Activated CD4-positive, alpha-beta T cell treated with anti-CD3 and anti-CD28 coated beads for 36 hours (primary cell): ENCODE measurements at regions of chr11 and their contacts with region 1.

Region 1: DNA sequence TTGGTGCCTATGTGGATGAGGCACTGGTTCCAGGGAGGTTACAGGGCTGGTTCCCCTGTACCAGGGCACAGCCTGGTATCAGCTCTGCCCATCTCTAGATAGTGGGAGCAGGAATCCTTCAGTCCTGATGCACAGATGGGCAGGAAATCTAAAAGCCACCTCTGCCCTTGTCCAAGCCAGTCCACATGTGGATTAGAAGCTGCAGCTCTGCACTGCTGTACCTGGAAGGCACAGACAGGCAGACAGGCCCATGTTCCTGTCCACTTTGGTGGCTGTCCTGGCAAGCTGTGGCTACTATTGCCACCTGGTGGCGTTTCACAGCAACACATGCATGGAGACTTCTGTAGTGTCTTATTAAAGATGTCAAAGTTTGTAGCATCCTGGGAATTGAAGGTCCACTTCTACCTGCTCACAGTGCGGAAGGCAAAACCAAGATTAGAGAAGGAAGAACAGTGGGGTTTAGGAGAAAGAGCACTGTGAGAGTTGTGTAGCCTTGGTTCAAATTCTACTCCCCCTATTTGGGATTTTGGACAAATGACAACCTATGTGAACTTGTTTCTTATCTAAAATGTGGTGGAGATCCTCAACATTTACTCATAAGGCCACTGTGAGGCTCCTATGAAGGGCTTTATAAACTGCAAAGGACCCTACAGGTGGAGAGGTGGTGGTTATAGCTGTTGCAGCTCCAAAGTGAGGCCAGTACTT is 30.1 kb downstream of the NAV2 start:
- DNase-seq: peak; percentile 82
- ATAC-seq: peak; percentile 78
- H3K4me3 Mint-ChIP-seq: no peak overlapping the region
- H3K27ac Mint-ChIP-seq: no peak overlapping the region
- H3K4me1 Mint-ChIP-seq: no peaks in the 10 kb centered on the region
- H3K27me3 Mint-ChIP-seq: peaks cover 2% of the 10 kb centered on the region

Region 2: DNA sequence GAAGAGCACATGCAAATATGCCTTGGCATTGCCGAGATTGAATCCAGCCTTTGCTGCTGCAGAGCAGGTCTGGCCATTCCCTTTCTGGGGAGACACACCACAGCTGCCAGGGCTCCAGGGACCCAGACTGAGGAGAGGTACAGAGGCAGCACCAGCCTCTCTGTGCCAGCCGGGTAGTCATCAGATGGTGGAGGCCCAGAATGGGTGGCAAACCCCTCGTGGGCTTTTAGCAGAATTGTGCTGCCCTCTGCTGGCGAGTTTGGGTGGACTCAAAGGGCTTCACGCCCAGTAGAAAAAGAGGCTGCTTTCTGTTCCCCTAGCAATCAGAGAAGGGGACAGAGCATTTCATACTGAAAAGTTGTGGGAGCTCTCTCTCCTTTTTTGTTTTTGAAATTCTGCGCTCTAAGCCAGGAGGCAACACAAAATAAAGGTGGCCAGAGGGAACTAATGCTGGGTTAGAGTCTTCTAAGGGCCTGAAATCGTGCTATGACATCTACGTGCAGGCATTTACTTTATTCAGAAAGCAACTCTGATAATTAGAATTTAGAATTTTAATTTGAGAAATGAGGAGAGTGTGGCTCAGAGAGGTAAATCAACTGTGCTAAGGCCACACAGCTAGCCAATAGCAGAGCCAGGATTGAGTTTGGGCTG is 188.9 kb before region 1 on chr11:
- CTCF ChIA-PET with region 1: interaction called, 48 read pairs
- POLR2A ChIA-PET with region 1: no interaction called
- intact Hi-C with region 1: loop called in 1 of 2 experiments (anchors 1 kb)
- DNase-seq: peak; percentile 90
- ATAC-seq: peak; percentile 86
- H3K4me3 Mint-ChIP-seq: no peak overlapping the region
- H3K27ac Mint-ChIP-seq: no peak overlapping the region
- H3K4me1 Mint-ChIP-seq: peaks cover 2% of the 10 kb centered on the region
- H3K27me3 Mint-ChIP-seq: peaks cover 10% of the 10 kb centered on the region

Region 3: GRCh38 chr11:19561011-19561410 is 181.7 kb before region 1 on chr11:
- CTCF ChIA-PET with region 1: interaction called, 48 read pairs
- POLR2A ChIA-PET with region 1: no interaction called
- intact Hi-C with region 1: loop called (anchors 1 kb)
- DNase-seq: no peak
- ATAC-seq: no peak
- H3K4me3 Mint-ChIP-seq: no peak overlapping the region
- H3K27ac Mint-ChIP-seq: no peak overlapping the region
- H3K4me1 Mint-ChIP-seq: peaks cover 2% of the 10 kb centered on the region
- H3K27me3 Mint-ChIP-seq: peaks cover 10% of the 10 kb centered on the region

Region 4: DNA sequence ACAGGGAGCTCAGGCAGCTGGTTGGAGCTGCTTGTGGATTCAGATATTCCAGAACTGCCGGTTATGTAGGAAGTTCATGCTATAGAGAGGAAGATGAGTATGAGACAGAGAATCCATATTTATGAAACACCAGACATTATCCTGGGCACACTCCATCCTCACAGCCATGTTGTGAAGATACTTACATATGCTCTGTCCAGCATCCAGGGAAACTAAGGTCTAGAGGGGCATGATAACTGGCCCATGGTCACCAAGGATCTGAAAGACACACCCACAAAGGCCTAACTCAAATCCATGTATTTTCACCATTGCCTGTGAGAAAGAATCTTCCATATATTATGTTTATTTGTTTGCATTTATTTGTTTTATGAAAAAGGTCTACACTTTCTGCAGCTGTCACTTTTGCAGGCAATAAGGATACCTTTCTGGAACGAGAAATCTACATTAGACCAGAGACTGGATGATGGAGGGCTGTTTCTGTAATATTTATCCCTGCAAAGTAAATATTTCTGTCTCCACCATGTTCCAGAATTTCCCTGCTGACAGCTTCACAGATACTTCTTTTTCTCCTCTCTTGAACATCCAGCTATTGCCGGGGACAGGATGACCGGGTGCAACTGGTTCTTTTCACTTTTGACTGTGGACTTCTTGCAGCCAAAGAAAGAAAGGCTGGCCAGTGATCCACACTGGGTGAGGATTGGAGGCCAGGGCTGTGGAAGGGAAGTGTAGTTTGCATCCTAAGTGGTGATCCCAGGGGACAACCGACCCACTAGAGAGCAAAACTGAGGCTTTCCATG is 176.0 kb before region 1 on chr11:
- CTCF ChIA-PET with region 1: interaction called, 46 read pairs
- POLR2A ChIA-PET with region 1: no interaction called
- intact Hi-C with region 1: loop called (anchors 1 kb)
- DNase-seq: no peak
- ATAC-seq: no peak
- H3K4me3 Mint-ChIP-seq: no peak overlapping the region
- H3K27ac Mint-ChIP-seq: no peak overlapping the region
- H3K4me1 Mint-ChIP-seq: no peaks in the 10 kb centered on the region
- H3K27me3 Mint-ChIP-seq: peaks cover 12% of the 10 kb centered on the region

Region 5: GRCh38 chr11:19903620-19904069 is 160.9 kb after region 1 on chr11:
- CTCF ChIA-PET with region 1: interaction called, 6 read pairs
- POLR2A ChIA-PET with region 1: no interaction called
- intact Hi-C with region 1: loop called (anchors 5 to 10 kb)
- DNase-seq: peak; percentile 77
- ATAC-seq: no peak
- H3K4me3 Mint-ChIP-seq: no peak overlapping the region
- H3K27ac Mint-ChIP-seq: no peak overlapping the region
- H3K4me1 Mint-ChIP-seq: no peaks in the 10 kb centered on the region
- H3K27me3 Mint-ChIP-seq: peaks cover 2% of the 10 kb centered on the region